Activated naive CD4-positive, alpha-beta T cell treated with anti-CD3 and anti-CD28 coated beads for 36 hours (primary cell): ENCODE measurements at regions of chr16 and their contacts with region 1.

Region 1: DNA sequence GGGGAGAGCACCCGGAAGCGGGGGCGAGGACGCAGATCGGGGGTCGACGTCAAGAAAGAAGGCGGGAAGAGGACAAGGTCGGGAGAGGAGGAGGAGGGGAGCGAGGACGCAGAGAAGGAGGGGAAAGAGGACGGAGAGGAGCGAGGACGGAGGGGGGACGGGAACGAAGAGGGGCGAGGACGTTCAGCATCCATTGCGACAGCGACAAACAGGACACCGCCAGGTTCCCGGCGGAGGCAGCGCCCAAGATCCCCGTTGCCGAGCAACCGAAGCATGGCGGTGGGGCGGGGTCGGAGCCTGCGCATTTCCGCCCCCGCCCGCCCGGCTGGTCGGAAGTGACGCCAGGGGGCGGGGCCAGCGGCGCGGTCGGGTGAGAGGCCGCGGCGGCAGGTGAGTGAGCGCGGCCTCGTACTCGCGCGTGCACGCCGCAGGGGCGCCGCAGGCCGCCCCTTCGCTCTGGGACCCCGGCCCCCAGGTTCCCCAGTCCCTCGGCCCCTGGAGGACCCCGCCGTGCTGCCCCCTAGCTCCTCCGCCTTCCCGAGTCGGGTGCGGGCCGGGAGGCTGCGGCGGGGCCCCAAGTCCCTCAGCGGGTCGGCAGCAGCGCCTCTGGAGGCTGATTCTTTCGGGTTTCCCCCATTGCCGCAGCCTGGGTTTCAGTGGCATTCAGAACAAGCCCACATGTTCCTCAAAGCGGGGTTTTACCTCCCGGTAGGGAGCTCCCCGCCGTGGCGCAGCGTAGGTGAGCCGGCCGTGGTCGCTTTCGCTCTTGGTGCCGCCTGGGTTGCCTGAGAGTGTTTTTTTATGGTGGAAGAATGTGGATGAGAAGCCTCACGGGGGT is at the start of gene FAM234A:
- DNase-seq: peak; percentile 97
- H3K4me3 Mint-ChIP-seq: peak within 1 kb of the TSS; percentile 94
- H3K27ac Mint-ChIP-seq: peak within 1 kb of the TSS; percentile 97
- H3K4me1 Mint-ChIP-seq: peaks cover 23% of the 10 kb centered on the region
- H3K27me3 Mint-ChIP-seq: no peaks in the 10 kb centered on the region
- total RNA-seq, gene FAM234A: 25.9 to 27.4 TPM

Region 2: DNA sequence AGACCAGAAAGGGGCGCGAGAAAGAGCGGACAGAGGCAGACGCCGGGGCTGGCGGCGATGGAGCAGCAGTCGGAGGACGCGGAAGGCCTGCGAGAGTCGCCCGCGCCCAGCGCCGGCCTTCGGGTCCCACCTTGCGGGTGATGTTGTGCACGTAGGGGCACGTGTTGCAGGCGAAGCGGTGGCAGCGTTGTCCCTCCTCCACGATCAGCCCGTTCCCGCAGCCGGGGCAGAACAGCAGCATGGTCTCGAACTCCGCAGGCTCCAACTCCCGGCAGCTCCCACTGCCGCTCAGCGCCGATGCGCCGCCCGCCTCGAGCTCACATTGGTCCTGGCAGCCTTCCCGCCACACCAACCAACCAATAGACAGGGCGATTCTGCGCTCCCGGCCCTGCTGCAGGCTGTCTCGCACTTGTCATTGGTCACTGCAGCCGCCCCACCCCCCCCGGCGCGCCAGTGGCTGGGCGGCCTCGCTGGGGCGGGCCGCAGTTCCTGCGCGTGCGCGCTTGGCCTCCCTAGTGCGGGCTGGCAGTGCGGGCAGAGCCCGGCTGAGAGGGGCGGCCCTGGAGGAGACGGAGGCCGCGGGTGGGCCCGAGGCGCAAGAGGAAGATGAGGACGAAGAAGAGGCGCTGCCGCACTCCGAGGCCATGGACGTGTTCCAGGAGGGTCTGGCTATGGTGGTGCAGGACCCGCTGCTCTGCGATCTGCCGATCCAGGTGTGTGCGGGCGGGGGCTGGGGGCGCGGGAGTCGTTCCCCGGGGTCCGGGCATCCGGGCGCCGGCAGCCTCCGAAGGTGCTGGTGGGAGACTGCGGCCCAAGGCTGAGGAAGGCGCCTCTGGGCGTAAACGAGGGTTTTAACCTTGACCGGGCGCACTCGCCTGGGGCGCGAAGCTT is 181.1 kb before region 1 on chr16 and contains the starts of genes POLR3K and SNRNP25:
- CTCF ChIA-PET with region 1: no interaction called
- intact Hi-C with region 1: loop called (anchors 1 kb)
- DNase-seq: peak; percentile 99
- H3K4me3 Mint-ChIP-seq: peak within 1 kb of the TSS; percentile 94
- H3K27ac Mint-ChIP-seq: peak within 1 kb of the TSS; percentile 91
- H3K4me1 Mint-ChIP-seq: peaks cover 31% of the 10 kb centered on the region
- H3K27me3 Mint-ChIP-seq: no peaks in the 10 kb centered on the region
- total RNA-seq, gene POLR3K: 38.2 to 40.9 TPM
- total RNA-seq, gene SNRNP25: 38.0 to 38.6 TPM

Region 3: GRCh38 chr16:252366-253337 is 18.0 kb after region 1 on chr16:
- CTCF ChIA-PET with region 1: interaction called, 8 read pairs
- intact Hi-C with region 1: loop called (anchors 1 kb)
- DNase-seq: peak; percentile 51
- H3K4me3 Mint-ChIP-seq: peak overlapping the region; percentile 57
- H3K27ac Mint-ChIP-seq: peak overlapping the region; percentile 50
- H3K4me1 Mint-ChIP-seq: peaks cover 19% of the 10 kb centered on the region
- H3K27me3 Mint-ChIP-seq: no peaks in the 10 kb centered on the region

Region 4: DNA sequence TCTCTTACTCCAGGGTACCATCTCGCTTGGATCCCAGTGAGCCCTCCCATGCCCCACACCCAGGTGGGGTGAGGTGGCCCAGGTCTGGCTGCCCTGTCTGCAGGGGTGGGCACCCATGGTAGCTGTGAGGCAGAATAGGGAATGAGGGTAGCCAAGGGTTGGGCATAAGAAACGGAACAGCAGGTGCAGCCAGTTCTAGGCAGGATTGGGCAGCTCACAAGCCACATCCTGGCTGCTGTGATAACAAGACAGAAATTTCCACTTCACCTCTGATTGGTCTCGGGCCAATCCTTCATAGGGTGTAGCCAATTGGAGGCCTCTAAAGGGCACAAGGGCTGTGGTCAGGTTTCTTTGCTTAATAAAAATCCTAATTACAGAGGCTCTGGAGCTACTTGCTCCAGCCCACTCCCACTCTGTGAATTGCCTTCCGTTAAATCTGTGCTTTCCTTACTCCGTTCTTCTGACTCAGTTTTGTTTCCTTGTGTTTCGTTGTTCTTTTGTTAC is 44.2 kb after region 1 on chr16:
- CTCF ChIA-PET with region 1: no interaction called
- intact Hi-C with region 1: no loop called
- DNase-seq: peak; percentile 42
- H3K4me3 Mint-ChIP-seq: no peak overlapping the region
- H3K27ac Mint-ChIP-seq: no peak overlapping the region
- H3K4me1 Mint-ChIP-seq: peaks cover 8% of the 10 kb centered on the region
- H3K27me3 Mint-ChIP-seq: peaks cover 18% of the 10 kb centered on the region

Region 5: DNA sequence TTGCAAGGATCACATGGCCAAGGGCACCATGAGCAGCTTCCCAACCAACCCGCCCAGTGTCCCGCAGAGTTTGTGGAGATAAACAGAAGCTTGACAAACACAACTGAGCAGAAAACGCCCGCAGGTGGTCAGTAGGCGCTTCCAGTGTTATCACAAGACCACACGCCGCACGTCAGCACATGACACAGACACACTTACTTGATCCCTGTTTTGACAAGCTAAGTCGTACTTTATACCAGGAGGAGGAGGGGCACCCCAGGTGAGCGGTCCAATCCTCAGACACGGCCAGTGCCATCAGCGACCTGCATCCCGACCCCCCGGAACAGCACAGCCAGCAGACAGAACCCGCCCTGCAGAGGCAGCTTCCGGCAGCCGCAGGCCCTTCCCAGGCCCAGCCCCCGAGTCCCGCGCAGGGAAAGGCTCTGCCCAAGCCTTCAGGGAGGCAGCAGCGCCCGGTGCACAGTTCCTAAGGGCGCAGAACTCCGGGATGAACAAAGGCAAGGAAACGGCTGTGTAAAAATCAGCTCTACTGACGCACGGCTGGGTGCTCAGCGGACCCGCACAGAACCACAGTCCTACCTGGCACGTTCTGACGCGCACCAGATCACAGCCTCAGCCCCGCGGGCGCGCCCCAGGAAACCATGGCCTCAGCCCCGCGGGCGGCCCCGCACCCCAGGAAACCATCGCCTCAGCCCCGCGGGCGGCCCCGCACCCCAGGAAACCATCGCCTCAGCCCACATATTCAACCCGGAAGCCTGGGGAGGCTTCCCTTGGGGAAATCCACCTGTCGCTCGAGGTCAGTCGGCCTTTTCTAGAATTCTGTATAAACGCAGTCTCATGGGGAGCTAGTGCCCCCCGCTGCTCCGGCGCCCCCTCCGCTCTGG is 90.0 kb after region 1 on chr16:
- CTCF ChIA-PET with region 1: interaction called, 3 read pairs
- intact Hi-C with region 1: loop called (anchors 2 kb)
- DNase-seq: peak; percentile 83
- H3K4me3 Mint-ChIP-seq: peak overlapping the region; percentile 71
- H3K27ac Mint-ChIP-seq: peak overlapping the region; percentile 55
- H3K4me1 Mint-ChIP-seq: peaks cover 64% of the 10 kb centered on the region
- H3K27me3 Mint-ChIP-seq: no peaks in the 10 kb centered on the region

Region 6: GRCh38 chr16:1019231-1020090 is 784.8 kb after region 1 on chr16:
- CTCF ChIA-PET with region 1: no interaction called
- intact Hi-C with region 1: no loop called
- DNase-seq: no peak
- H3K4me3 Mint-ChIP-seq: no peak overlapping the region
- H3K27ac Mint-ChIP-seq: no peak overlapping the region
- H3K4me1 Mint-ChIP-seq: no peaks in the 10 kb centered on the region
- H3K27me3 Mint-ChIP-seq: no peaks in the 10 kb centered on the region